K562 (cell line): ENCODE measurements at regions of chr6 and their contacts with region 1.

Region 1: DNA sequence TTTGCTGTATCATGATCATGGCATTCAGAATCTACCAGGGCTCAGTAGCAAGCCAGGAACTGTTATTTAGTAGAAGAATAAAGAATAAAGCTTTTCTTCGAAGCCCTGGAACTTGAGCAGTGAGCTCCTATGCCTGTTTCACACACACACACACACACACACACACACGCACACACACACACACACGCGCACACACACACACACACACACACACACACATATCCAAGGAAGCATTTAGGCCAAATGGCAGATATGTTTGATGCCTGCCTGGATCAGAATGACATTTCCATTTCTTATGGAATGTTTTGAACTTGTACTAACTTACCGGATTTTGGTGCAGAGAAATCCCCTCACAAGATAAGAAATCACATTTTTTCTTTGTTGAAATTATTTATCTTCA is 35.5 kb downstream of the RPP21 start:
- DNase-seq: no peak
- ATAC-seq: no peak
- H3K4me3 ChIP-seq: no peak overlapping the region
- H3K27ac ChIP-seq: no peak overlapping the region
- H3K4me1 ChIP-seq: no peaks in the 10 kb centered on the region
- H3K27me3 ChIP-seq: no peaks in the 10 kb centered on the region
- CTCF ChIP-seq: no peak
- EP300 ChIP-seq: no peak
- POLR2A ChIP-seq: no peak
- RAD21 ChIP-seq: no peak

Region 2: GRCh38 chr6:30259140-30260035 is 121.1 kb before region 1 on chr6:
- CTCF ChIA-PET with region 1: no interaction called
- POLR2A ChIA-PET with region 1: no interaction called
- in situ Hi-C with region 1: loop called (anchors 5 kb)
- intact Hi-C with region 1: no loop called
- DNase-seq: peak in 1 of 4 experiments; percentile 18
- ATAC-seq: no peak
- H3K4me3 ChIP-seq: no peak overlapping the region
- H3K27ac ChIP-seq: no peak overlapping the region
- H3K4me1 ChIP-seq: peaks cover 0 to 10% of the 10 kb centered on the region in 2 experiments; a peak in 1 of 5 replicates
- H3K27me3 ChIP-seq: peaks cover 40 to 55% of the 10 kb centered on the region in 2 experiments
- CTCF ChIP-seq: no peak
- EP300 ChIP-seq: no peak
- POLR2A ChIP-seq: no peak
- RAD21 ChIP-seq: no peak

Region 3: DNA sequence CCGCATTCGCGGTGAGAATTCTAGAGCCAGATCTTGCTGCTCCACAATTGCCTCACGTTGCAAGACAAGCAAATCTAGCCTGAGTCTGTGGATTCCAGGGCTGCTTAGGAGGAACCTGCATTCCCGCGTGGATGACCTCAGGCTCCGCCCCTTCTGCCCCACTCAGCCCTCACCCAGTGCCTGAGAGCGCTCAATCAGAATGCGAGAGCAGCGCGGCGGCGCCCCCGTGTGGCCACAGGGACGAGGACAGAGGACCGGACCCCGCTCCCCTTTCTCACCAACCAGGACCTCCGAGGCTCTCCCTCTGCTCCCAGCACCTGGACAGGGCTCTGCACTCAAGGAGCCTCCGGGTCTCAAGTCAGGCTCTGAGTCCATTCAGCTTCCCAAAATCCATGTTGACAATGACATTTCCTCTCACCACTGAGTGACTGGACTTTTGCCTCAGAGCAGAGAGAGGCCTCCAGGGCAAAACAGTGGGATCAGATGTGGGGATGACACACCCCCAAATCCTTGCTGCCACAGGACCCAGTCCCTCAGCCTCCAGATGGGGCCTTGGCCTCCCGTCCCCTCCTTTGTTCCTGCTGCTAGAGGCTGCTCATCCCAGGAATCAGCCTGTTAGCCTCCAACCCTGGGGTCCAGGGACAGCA is 16.5 kb after region 1 on chr6:
- CTCF ChIA-PET with region 1: no interaction called
- POLR2A ChIA-PET with region 1: no interaction called
- in situ Hi-C with region 1: no loop called
- intact Hi-C with region 1: no loop called
- DNase-seq: peak; percentile 90 to 96 (median 94)
- ATAC-seq: peak; percentile 100
- H3K4me3 ChIP-seq: no peak overlapping the region
- H3K27ac ChIP-seq: no peak overlapping the region
- H3K4me1 ChIP-seq: peaks cover 0 to 3% of the 10 kb centered on the region in 2 experiments; a peak in 2 of 5 replicates
- H3K27me3 ChIP-seq: peaks cover 26 to 38% of the 10 kb centered on the region in 2 experiments
- CTCF ChIP-seq: peak; percentile 96 to 98 (median 96)
- EP300 ChIP-seq: no peak
- POLR2A ChIP-seq: no peak
- RAD21 ChIP-seq: peak; percentile 90 to 99

Region 4: GRCh38 chr6:30515932-30516753 is 135.7 kb after region 1 on chr6:
- CTCF ChIA-PET with region 1: no interaction called
- POLR2A ChIA-PET with region 1: no interaction called
- in situ Hi-C with region 1: no loop called
- intact Hi-C with region 1: no loop called
- DNase-seq: peak; percentile 91 to 96 (median 94)
- ATAC-seq: peak; percentile 97
- H3K4me3 ChIP-seq: peak overlapping the region; percentile 44
- H3K27ac ChIP-seq: peak overlapping the region; percentile 93
- H3K4me1 ChIP-seq: peaks cover 2 to 10% of the 10 kb centered on the region in 2 experiments; a peak in 3 of 5 replicates
- H3K27me3 ChIP-seq: no peaks in the 10 kb centered on the region
- CTCF ChIP-seq: no peak
- EP300 ChIP-seq: peak; percentile 78; the same call in 1 of the 2 replicates
- POLR2A ChIP-seq: peak; percentile 95
- RAD21 ChIP-seq: peak in 1 of 2 experiments; percentile 3; a peak in 1 of 4 replicates